K562 (cell line): ENCODE measurements at regions of chr10 and their contacts with region 1.

Region 1: GRCh38 chr10:92757066-92757710 is 67.4 kb downstream of the HHEX start:
- DNase-seq: peak; percentile 38 to 90 (median 58)
- ATAC-seq: peak; percentile 81
- H3K4me3 ChIP-seq: peak overlapping the region; percentile 18
- H3K27ac ChIP-seq: peak overlapping the region; percentile 97
- H3K4me1 ChIP-seq: peaks cover 15 to 62% of the 10 kb centered on the region in 2 experiments
- H3K27me3 ChIP-seq: no peaks in the 10 kb centered on the region
- CTCF ChIP-seq: peak; percentile 41 to 50 (median 46); a peak in 5 of 6 replicates
- EP300 ChIP-seq: peak; percentile 70
- POLR2A ChIP-seq: 0 out of 2 replicates have a peak, but pooled peaks have one; percentile 52
- RAD21 ChIP-seq: peak; percentile 13 to 28; a peak in 1 of 4 replicates

Region 2: GRCh38 chr10:92342796-92343195 is 414.4 kb before region 1 on chr10:
- CTCF ChIA-PET with region 1: no interaction called
- POLR2A ChIA-PET with region 1: no interaction called
- in situ Hi-C with region 1: no loop called
- intact Hi-C with region 1: no loop called
- DNase-seq: no peak
- ATAC-seq: no peak
- H3K4me3 ChIP-seq: no peak overlapping the region
- H3K27ac ChIP-seq: no peak overlapping the region
- H3K4me1 ChIP-seq: no peaks in the 10 kb centered on the region
- H3K27me3 ChIP-seq: no peaks in the 10 kb centered on the region
- CTCF ChIP-seq: no peak
- EP300 ChIP-seq: no peak
- POLR2A ChIP-seq: no peak
- RAD21 ChIP-seq: no peak

Region 3: DNA sequence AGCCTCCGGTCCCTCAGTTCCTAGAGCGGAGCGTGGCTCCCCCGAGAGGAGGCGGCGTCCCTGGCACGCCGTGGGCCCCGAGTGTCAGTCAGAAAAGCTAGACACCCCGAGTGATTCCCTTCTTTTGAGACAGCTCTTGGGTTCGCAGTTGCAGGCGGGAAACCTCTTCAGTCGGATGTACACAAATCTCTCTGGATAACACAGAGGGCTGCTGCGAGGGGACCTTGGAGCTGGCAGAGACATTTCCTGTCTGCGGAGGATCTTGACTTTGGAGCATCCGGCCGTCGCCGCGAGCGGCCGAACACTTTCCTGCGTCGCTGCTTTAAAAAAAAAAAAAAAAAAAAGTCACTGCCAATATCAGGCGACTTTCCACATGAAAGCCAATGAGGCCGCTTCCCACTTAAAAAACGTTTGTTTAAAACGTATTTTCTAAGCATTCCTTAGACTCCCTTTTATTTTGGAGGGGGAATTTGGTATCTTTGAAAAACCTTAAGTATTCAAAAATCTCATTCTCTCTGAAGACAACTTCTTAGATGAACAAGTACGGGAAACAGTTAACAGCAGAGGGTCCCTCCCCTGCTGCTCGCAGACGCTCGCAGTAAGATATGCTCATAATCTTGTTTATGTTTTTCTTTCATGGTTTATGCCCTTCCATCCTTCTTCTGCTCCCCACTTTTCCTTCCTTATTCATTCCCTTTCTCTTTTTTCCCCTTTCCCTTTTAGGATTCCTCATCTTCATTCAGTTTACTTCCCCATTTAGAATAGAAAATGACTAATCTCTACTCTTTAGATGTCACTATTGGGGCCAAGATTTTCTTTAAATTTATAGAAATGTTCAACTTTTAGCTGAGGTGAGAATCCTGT is 57.4 kb before region 1 on chr10:
- CTCF ChIA-PET with region 1: no interaction called
- POLR2A ChIA-PET with region 1: interaction called, 5 read pairs
- in situ Hi-C with region 1: loop called (anchors 5 kb)
- intact Hi-C with region 1: loop called (anchors 1 kb)
- DNase-seq: peak in 2 of 4 experiments; percentile 49 to 78
- ATAC-seq: peak; percentile 50
- H3K4me3 ChIP-seq: peak overlapping the region; percentile 37
- H3K27ac ChIP-seq: peak overlapping the region; percentile 87
- H3K4me1 ChIP-seq: peaks cover 19 to 31% of the 10 kb centered on the region in 2 experiments; a peak in 4 of 5 replicates
- H3K27me3 ChIP-seq: no peaks in the 10 kb centered on the region
- CTCF ChIP-seq: no peak
- EP300 ChIP-seq: no peak
- POLR2A ChIP-seq: peak; percentile 64
- RAD21 ChIP-seq: no peak

Region 4: DNA sequence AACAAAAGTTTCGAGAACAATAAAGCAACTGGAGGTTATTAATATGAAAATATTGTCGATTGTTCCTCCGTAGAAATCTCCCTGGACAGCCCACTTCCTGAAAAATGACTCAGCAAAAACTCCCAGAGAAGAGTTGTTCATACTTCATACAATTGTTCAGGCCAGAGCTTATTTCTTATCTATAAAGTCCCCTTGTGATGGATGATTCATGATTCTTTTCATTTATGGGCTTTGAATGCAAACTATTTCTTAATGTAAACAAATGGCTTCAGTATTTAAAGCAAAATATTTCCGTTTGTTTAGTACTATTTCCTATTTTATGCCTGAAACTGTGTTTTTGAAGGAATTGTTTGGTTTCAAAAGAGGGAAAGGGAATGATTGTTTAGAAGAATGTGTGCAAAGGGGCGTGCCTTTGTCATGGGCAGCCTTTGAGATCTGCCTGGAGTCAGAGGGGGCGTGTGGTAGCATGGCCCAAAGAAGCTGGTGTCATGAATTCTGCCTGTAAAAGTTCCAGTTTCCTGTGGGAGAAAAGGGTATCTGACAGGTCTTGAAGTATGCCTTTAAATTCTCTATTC is 65.0 kb after region 1 on chr10:
- CTCF ChIA-PET with region 1: no interaction called
- POLR2A ChIA-PET with region 1: no interaction called
- in situ Hi-C with region 1: loop called (anchors 5 kb)
- intact Hi-C with region 1: no loop called
- DNase-seq: peak; percentile 68 to 75 (median 70)
- ATAC-seq: peak; percentile 86
- H3K4me3 ChIP-seq: no peak overlapping the region
- H3K27ac ChIP-seq: peak overlapping the region; percentile 89
- H3K4me1 ChIP-seq: peaks cover 0 to 9% of the 10 kb centered on the region in 2 experiments; a peak in 3 of 5 replicates
- H3K27me3 ChIP-seq: no peaks in the 10 kb centered on the region
- CTCF ChIP-seq: no peak
- EP300 ChIP-seq: peak; percentile 68
- POLR2A ChIP-seq: no peak
- RAD21 ChIP-seq: no peak